Heart left ventricle (tissue), 16 donors: ENCODE measurements at regions of chr16 and their contacts with region 1.

Region 1: DNA sequence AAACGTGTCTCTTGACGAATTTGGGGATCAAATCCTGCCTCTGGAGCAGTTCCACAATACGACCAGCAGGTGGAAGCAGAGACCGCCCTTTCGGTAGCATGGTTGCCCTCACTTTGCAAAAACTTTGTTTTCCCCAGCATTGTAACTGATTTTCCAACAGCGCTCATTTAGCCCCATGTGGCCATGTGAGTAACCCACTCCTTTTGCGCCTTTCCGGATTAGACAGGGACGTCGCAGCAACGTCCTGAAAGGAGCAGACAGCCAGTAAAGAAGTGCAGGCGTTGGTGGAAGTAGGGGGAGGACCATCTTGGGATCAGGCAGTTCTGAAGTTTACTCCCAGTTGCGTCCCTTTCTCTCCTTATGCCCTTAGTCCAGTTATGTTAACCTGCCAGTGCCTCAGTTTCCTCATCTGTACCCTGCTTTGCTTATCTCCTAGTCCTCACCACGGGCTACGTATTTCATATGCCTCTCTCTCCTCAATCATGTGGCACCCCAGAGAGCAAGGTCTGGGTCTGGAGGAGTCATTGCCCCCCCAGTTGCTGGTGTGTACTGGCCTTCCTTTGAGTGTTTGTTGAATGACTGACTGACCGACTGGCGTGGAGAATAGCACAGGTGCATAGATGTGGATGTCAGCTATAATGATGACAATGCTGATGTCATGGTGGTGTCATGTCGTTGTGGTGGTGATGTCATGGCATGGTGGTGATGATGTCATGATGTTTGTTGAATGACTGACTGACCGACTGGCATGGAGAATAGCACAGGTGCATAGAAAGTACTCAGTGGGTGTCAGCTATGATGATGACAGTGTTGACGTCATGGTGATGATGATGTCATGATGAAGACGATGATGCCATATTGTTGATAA is 22.3 kb downstream of the TMEM114 start:
- DNase-seq: peak; percentile 53 to 74 (median 65)
- ATAC-seq: peak in 3 of 4 donors; percentile 77 to 88 (median 84)
- H3K4me3 ChIP-seq: no peak overlapping the region
- H3K27ac ChIP-seq: no peak overlapping the region
- H3K4me1 ChIP-seq: peaks cover 0 to 12% (median 0%) of the 10 kb centered on the region in 12 donors
- H3K27me3 ChIP-seq: peaks cover 0 to 7% (median 0%) of the 10 kb centered on the region in 9 donors
- CTCF ChIP-seq: peak; percentile 92 to 98 (median 97)
- POLR2A ChIP-seq: no peak

Region 2: GRCh38 chr16:8655184-8655717 is 87.3 kb after region 1 on chr16:
- intact Hi-C with region 1: loop called in 1 of 10 experiments (anchors 5 kb)
- DNase-seq: no peak
- ATAC-seq: peak in 1 of 4 donors; percentile 45
- H3K4me3 ChIP-seq: no peak overlapping the region
- H3K27ac ChIP-seq: no peak overlapping the region
- H3K4me1 ChIP-seq: no peaks in the 10 kb centered on the region
- H3K27me3 ChIP-seq: no peaks in the 10 kb centered on the region
- CTCF ChIP-seq: peak in 6 of 12 donors; percentile 8 to 33 (median 19)
- POLR2A ChIP-seq: no peak

Region 3: GRCh38 chr16:8878521-8878911 is 310.5 kb after region 1 on chr16:
- intact Hi-C with region 1: loop called (anchors 2 to 10 kb)
- DNase-seq: peak in 1 of 5 donors; percentile 35
- ATAC-seq: no peak
- H3K4me3 ChIP-seq: no peak overlapping the region
- H3K27ac ChIP-seq: no peak overlapping the region
- H3K4me1 ChIP-seq: peaks cover 0 to 4% (median 0%) of the 10 kb centered on the region in 12 donors
- H3K27me3 ChIP-seq: no peaks in the 10 kb centered on the region
- CTCF ChIP-seq: no peak
- POLR2A ChIP-seq: no peak

Region 4: DNA sequence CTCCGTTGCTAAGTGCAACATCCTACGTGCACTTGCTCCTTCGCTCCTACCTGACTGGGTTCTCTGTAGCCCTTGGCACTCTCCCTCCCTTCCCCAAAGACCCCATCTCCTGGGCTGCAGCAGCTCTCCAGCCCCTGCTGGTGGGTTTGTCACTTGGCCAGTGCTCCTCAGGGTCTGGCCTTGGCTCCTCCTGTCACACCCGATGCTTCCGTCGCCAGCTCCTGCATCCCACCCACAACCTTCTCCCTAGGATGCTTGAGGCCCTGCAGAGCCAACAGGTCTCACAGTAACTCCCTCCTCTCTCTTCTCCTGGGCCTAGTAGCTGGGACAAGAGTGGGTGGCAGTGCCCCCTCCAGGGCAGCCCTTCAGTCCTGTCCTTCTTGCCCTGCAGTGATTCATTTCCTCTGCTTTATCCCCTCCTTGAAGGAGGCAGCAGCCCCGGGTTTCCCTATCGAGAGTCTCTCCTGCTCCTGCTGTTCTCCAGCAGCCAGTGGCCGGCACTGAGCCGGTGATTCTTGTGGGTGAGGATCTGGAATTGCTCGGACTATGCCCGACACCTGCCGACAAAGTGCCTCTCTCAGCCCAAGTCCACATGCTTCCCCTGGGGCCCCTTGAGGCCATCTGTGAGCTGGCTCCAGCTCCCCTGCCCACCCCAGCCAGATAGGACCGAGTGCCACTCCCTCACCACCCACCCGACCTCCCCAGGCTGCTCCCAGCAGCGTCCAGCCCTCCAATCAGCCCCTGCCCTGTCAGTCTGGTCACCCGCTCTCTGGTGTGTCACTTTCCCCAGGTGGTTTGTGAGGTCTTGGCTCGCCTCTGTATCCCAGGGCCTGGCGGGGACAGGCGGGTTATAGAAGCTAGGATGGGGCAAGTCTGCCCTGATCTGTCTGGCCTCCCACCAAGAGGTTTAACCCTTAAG is 317.9 kb after region 1 on chr16:
- intact Hi-C with region 1: loop called (anchors 2 to 10 kb)
- DNase-seq: no peak
- ATAC-seq: peak in 3 of 4 donors; percentile 18 to 23 (median 21)
- H3K4me3 ChIP-seq: no peak overlapping the region
- H3K27ac ChIP-seq: no peak overlapping the region
- H3K4me1 ChIP-seq: peaks cover 0 to 25% (median 17%) of the 10 kb centered on the region in 12 donors
- H3K27me3 ChIP-seq: peaks cover 0 to 5% (median 0%) of the 10 kb centered on the region in 9 donors
- CTCF ChIP-seq: no peak
- POLR2A ChIP-seq: no peak

Region 5: GRCh38 chr16:8936421-8936820 is 368.4 kb after region 1 on chr16:
- intact Hi-C with region 1: no loop called
- DNase-seq: no peak
- ATAC-seq: peak in 3 of 4 donors; percentile 47 to 60 (median 59)
- H3K4me3 ChIP-seq: no peak overlapping the region
- H3K27ac ChIP-seq: no peak overlapping the region
- H3K4me1 ChIP-seq: peaks cover 4 to 75% (median 46%) of the 10 kb centered on the region in 12 donors
- H3K27me3 ChIP-seq: no peaks in the 10 kb centered on the region
- CTCF ChIP-seq: peak in 11 of 12 donors; percentile 15 to 56 (median 38)
- POLR2A ChIP-seq: no peak